ENCODE measurements at regions of chr19 and their contacts with region 1.

Region 1: DNA sequence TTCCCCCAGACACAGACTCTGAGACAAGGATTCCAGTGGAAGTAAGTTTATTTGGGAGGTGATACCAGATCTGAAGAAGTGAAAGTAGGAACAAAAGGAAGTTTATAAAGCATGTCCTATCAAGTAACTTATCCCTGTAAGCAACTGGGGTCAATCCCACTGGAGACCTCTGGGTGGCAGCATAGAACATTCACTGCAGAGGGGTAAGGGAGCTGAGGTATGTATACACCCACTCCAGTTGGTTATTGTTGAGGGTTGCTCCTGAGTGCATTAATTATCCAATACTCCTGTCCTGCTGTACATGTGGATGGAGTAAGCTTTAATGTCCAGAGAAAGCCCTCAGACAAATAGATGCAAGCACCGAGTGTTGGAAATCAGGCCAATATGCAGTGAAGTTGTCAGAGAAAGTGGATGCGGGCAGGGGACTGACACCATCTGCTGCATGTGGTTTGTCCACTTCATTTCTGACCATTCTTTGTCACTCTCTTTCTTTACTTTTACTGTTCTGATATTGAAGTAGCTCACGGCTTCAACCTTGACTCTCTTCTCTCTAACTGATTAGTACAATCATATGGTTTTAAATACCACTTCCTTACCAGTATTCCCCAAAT is 46.7 kb downstream of the NOTCH3 start:
- DNase-seq: peak; percentile 50
- H3K4me3 Mint-ChIP-seq: no peak overlapping the region
- H3K27ac Mint-ChIP-seq: no peak overlapping the region
- H3K4me1 Mint-ChIP-seq: peaks cover 15% of the 10 kb centered on the region
- H3K27me3 Mint-ChIP-seq: peaks cover 27% of the 10 kb centered on the region
- CTCF ChIP-seq: peak; percentile 37

Region 2: DNA sequence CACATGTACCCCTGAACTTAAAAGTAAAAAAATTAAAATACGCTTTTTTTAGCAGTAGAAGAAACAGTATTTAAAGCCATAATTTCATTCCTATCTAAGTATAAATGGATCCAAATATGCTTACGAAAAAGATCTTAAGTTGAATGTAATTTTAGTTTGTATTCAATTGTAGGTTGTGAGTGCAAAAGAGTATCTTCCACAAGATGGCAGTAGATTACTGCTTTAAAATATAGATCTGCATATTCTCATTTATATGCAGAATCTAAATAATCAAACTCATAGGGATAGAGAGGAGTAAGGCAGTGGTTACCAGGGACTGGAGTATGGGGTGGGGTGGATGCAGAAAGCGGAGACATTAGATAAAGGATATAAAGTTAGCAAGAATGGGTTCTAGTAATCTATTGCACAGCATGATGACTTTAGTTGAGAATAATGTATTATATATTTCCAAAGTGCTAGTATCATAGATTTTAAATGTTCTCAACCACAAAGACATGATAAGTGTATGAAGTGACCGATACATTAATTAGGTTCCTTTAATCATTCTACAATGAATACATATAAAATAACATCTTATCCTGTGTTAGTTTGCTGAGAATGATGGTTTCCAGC is 282.4 kb before region 1 on chr19:
- CTCF ChIA-PET with region 1: no interaction called
- intact Hi-C with region 1: loop called (anchors 5 kb)
- DNase-seq: no peak
- H3K4me3 Mint-ChIP-seq: no peak overlapping the region
- H3K27ac Mint-ChIP-seq: no peak overlapping the region
- H3K4me1 Mint-ChIP-seq: no peaks in the 10 kb centered on the region
- H3K27me3 Mint-ChIP-seq: peaks cover 45% of the 10 kb centered on the region
- CTCF ChIP-seq: no peak

Region 3: DNA sequence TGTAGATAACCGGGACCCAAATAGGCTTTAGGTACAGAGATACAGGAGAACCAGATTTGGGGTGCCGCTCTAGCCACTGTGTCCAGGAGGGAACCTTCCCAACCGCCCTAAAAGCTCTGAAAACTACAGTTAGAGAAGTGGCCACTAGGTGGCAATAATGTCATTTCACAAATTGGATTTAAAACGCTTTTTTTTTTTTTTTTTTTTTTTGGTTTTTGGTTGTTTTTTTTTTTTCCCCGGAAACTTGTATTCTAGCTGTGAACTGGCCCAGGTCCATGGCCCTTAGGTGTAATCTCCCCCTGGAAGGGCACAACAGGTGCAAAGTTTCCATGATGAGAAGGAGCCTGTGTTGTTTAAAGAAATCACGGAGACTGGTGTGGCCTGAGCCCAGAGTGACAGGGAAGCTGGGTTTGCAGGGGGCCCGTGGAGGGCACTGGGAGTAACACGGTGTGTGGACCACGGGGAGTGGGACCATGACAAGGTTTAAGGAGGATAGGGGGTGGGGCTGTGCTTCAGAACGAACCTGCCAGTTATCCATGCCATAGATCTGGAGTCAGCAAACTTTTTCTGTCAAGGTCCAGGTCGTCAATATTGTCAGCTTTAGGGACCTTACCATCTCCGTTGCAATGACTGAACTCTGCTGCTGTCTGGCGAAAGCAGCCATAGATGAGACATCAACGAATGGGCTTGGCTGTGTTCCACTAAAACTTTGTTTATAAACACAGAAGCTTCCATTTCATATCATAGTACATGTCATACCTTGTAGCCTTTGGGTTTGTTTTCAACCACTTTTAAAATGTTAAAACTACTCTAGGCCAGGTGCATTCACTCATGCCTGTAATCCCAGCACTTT is 62.0 kb before region 1 on chr19:
- CTCF ChIA-PET with region 1: interaction called, 4 read pairs
- intact Hi-C with region 1: loop called (anchors 2 kb)
- DNase-seq: peak; percentile 45
- H3K4me3 Mint-ChIP-seq: no peak overlapping the region
- H3K27ac Mint-ChIP-seq: no peak overlapping the region
- H3K4me1 Mint-ChIP-seq: no peaks in the 10 kb centered on the region
- H3K27me3 Mint-ChIP-seq: peaks cover 23% of the 10 kb centered on the region
- CTCF ChIP-seq: peak; percentile 44

Region 4: GRCh38 chr19:15101479-15102082 is 52.5 kb before region 1 on chr19:
- CTCF ChIA-PET with region 1: interaction called, 12 read pairs
- intact Hi-C with region 1: no loop called
- DNase-seq: peak; percentile 43
- H3K4me3 Mint-ChIP-seq: no peak overlapping the region
- H3K27ac Mint-ChIP-seq: no peak overlapping the region
- H3K4me1 Mint-ChIP-seq: peaks cover 3% of the 10 kb centered on the region
- H3K27me3 Mint-ChIP-seq: peaks cover 16% of the 10 kb centered on the region
- CTCF ChIP-seq: peak; percentile 61

Region 5: DNA sequence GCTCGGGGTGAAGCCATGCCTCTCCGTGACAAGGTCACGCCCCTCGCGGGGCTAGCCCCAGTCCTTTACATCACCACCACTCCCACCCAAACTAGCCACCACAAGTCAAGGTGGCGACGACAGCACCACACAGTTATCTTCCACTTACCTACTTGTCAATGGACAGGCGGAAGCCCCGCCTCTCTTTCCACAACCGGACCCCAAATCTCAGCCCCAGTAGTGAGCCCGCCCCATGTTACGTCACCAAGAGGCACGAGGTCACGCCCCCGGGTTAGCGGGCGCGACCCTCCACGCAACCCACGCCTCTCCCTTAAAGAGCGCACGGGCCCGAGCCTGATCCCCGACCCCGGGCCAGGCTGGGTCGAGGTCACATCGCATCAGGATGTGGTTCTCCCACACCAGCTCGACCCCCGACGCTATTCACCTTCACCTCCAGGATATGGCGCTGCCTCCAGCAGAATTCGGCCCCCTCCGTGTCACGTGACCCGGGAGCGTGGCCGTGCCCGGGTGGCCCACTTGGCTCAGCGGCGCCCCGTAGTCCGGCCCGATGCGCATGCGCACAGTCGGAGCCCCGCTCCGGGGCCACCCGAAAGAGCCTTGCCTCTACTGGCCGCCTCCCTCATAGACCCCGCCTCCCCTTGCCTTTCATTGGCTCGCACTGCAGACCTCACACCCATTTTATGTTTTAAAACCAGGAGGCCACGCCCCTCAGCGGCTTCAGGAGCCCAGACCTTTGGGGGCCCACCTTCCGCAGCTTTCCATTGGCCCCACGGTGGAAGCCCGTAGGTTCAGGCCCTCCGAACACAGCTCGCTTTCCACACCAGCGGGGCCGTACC is 28.7 kb before region 1 on chr19:
- CTCF ChIA-PET with region 1: no interaction called
- intact Hi-C with region 1: loop called (anchors 1 kb)
- DNase-seq: peak; percentile 96
- H3K4me3 Mint-ChIP-seq: peak overlapping the region; percentile 89
- H3K27ac Mint-ChIP-seq: peak overlapping the region; percentile 95
- H3K4me1 Mint-ChIP-seq: peaks cover 7% of the 10 kb centered on the region
- H3K27me3 Mint-ChIP-seq: no peaks in the 10 kb centered on the region
- CTCF ChIP-seq: no peak

Region 6: DNA sequence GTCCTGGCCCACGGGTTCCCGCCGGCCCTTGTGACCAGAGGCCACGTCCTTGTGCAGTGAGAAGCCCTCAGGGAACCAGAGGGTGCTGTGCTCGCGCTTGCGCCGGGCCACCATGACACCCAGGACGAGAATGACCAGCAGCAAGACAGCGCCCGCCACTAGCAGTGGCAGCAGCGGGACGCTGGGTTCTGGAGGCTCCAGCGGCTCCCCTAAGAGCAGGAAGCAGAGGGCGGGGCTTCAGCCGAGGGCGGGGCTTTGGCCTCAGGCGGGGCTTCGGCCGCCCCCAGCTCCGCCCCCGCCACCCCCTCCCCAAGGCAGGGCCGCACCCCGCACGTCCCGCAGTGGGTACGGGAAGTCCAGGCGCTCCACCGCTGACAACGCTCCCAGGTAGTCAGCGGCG is 16.2 kb after region 1 on chr19:
- CTCF ChIA-PET with region 1: no interaction called
- intact Hi-C with region 1: no loop called
- DNase-seq: no peak
- H3K4me3 Mint-ChIP-seq: no peak overlapping the region
- H3K27ac Mint-ChIP-seq: no peak overlapping the region
- H3K4me1 Mint-ChIP-seq: no peaks in the 10 kb centered on the region
- H3K27me3 Mint-ChIP-seq: no peaks in the 10 kb centered on the region
- CTCF ChIP-seq: no peak

Region 7: GRCh38 chr19:15555759-15556633 is 401.9 kb after region 1 on chr19:
- CTCF ChIA-PET with region 1: no interaction called
- intact Hi-C with region 1: loop called (anchors 10 kb)
- DNase-seq: peak; percentile 94
- H3K4me3 Mint-ChIP-seq: peak overlapping the region; percentile 82
- H3K27ac Mint-ChIP-seq: no peak overlapping the region
- H3K4me1 Mint-ChIP-seq: peaks cover 15% of the 10 kb centered on the region
- H3K27me3 Mint-ChIP-seq: peaks cover 14% of the 10 kb centered on the region
- CTCF ChIP-seq: peak; percentile 55

Measured in Calu3 (cell line).